ENCODE measurements at regions of chr20 and their contacts with region 1.

Region 1: DNA sequence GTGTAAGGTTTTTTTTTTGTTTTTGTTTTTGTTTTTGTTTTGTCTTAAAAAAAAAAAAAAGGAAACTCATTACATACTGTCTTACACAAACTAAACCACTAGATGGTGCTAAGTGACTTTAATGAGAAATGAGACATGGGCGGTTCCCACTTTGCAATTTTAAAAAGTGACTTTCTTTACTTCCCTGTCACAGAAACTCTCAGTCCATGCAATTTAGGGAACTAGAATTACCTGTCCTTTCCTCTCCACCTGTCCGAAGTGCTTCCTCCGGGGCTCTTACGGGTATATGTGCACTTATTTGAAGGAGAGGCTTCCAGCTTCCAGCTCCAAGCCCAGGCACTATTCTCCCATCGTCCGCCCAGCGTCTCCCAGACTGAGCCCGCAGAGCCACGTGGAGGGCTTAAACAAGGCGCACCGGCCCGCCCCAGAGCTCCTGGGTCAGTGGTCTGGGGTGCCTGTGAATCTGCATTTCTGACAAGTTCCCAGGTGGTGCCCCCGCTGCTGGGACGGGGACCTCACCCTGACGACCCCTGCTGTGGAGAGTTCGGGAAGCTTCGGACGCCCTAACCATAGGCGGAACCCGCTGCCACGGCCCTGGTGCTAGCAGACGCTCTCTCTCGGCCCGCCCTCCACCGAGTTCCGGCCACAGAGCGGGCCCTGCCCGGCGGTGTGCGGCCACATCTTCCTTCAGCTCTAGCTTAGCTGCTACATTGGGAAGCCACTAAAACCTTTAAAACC is 26.1 kb downstream of the BFSP1 start:
- DNase-seq: peak; percentile 67
- H3K4me3 Mint-ChIP-seq: peak overlapping the region; percentile 80
- H3K27ac Mint-ChIP-seq: peak overlapping the region; percentile 66
- H3K4me1 Mint-ChIP-seq: peaks cover 35% of the 10 kb centered on the region
- H3K27me3 Mint-ChIP-seq: no peaks in the 10 kb centered on the region

Region 2: DNA sequence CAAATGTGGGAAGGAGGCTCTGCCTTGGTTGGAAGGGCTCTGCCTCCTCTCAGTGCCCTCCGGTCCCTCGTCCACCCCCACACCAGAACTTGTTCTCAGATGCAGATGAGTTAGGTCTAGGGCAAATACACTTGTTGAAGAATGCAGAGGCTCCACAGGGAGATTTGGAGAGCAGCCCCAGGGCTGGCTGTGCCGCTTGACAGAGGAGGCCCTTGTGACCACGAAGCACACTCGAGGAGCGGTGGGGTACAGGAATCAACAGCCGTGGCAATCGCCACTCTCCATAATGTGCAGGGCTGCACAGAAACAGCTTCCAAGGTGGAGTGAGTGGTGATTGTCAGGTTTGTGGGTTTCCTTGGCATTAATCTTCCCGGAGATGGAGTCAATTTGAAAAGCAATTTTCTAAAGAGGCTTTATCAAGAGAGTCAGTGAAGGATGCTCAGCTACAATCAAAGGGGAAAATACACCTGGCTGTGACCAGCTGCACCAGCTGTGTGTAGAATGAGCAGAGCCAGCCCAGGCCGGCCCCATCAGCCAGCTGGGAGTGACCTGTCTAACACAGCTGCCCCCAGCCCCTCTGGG is 33.4 kb before region 1 on chr20:
- CTCF ChIA-PET with region 1: no interaction called
- POLR2A ChIA-PET with region 1: no interaction called
- intact Hi-C with region 1: no loop called
- DNase-seq: no peak
- H3K4me3 Mint-ChIP-seq: no peak overlapping the region
- H3K27ac Mint-ChIP-seq: no peak overlapping the region
- H3K4me1 Mint-ChIP-seq: no peaks in the 10 kb centered on the region
- H3K27me3 Mint-ChIP-seq: peaks cover 1% of the 10 kb centered on the region

Region 3: DNA sequence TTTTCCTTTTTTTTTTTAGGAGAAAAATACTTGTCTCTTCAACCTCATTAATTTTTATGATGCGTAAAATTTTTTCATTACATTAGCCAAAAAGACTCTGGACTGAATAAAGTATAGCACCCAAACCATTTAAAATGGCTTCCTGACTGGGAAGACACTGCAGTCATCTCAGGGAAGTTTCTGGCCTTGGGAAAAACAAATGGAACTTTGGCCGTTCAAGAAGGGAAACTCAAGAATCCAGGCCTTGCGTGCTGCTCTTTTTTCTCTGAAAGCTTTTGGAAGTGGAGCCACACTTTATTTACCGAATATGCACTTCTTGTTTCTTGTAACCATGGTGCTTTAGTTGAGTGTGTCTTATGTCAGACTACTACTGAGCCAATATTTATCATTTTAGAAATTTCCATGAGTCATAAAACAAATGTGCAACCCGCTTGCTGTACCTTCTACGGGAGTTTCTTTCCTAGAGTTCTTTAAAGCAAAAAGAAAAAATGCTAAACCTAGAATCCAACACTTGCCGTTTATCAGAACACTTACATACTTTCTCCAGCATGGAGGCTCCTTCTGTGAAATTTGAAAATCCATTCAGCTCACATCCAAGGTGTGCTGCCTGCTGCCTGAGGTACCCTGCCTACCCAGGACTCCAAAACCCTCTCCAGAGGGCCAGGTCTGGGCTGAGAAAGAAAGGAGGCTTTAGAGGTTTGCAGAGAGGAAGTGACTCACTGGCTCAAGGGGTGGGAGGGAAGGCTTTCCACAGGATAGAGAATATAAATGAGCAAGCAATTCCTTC is 53.3 kb after region 1 on chr20:
- CTCF ChIA-PET with region 1: interaction called, 3 read pairs
- POLR2A ChIA-PET with region 1: no interaction called
- intact Hi-C with region 1: loop called (anchors 2 kb)
- DNase-seq: peak; percentile 59
- H3K4me3 Mint-ChIP-seq: peak overlapping the region; percentile 14
- H3K27ac Mint-ChIP-seq: peak overlapping the region; percentile 87
- H3K4me1 Mint-ChIP-seq: peaks cover 38% of the 10 kb centered on the region
- H3K27me3 Mint-ChIP-seq: no peaks in the 10 kb centered on the region

Region 4: DNA sequence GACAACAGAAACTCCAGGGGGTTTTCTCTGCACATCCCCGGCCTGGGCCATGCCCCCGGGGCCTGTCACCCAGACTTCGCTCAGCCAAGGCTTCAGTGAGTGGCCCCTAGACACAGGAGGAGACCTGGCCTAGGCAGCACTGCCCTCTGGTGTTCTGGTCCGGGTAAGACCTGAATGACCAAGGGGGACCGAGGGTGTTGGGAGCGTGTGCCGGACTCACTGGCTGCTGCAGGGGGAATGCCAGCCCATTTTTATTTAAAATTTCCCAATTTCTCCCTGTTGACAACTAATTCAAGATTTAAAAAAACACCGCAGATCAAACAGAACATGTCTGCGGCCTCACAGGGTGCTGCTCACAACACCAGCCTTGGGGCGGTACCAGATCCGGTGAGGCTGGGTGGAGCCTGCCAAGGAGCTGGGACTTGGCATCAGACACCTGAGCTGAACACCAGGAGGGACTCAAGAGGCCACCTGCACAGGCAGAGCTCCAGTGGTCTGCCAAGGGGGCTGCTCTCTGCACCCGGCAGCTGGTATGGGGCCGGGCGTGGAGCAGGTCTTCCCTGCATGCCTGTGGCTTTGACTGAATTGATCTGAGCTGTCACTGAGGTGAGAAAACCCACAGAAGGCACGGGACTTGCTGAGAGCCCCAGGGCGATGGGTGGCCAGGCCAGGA is 112.6 kb after region 1 on chr20:
- CTCF ChIA-PET with region 1: interaction called, 27 read pairs
- POLR2A ChIA-PET with region 1: no interaction called
- intact Hi-C with region 1: loop called (anchors 1 kb)
- DNase-seq: peak; percentile 63
- H3K4me3 Mint-ChIP-seq: no peak overlapping the region
- H3K27ac Mint-ChIP-seq: no peak overlapping the region
- H3K4me1 Mint-ChIP-seq: peaks cover 3% of the 10 kb centered on the region
- H3K27me3 Mint-ChIP-seq: no peaks in the 10 kb centered on the region

Region 5: GRCh38 chr20:17898548-17898994 is 393.5 kb after region 1 on chr20:
- CTCF ChIA-PET with region 1: interaction called, 32 read pairs
- POLR2A ChIA-PET with region 1: interaction called, 4 read pairs
- intact Hi-C with region 1: loop called (anchors 1 kb)
- DNase-seq: peak; percentile 73
- H3K4me3 Mint-ChIP-seq: no peak overlapping the region
- H3K27ac Mint-ChIP-seq: no peak overlapping the region
- H3K4me1 Mint-ChIP-seq: peaks cover 16% of the 10 kb centered on the region
- H3K27me3 Mint-ChIP-seq: peaks cover 23% of the 10 kb centered on the region

Region 6: GRCh38 chr20:18137412-18138265 is 632.6 kb after region 1 on chr20 and contains the starts of genes KAT14 and PET117:
- CTCF ChIA-PET with region 1: interaction called, 3 read pairs
- POLR2A ChIA-PET with region 1: no interaction called
- intact Hi-C with region 1: loop called (anchors 2 kb)
- DNase-seq: peak; percentile 93
- H3K4me3 Mint-ChIP-seq: peak within 1 kb of the TSS; percentile 65
- H3K27ac Mint-ChIP-seq: peak within 1 kb of the TSS; percentile 76
- H3K4me1 Mint-ChIP-seq: peaks cover 29% of the 10 kb centered on the region
- H3K27me3 Mint-ChIP-seq: no peaks in the 10 kb centered on the region
- total RNA-seq, gene KAT14: 14.2 to 14.4 TPM
- total RNA-seq, gene PET117: 15.2 to 15.9 TPM

Measured in activated CD4-positive, alpha-beta memory T cell treated with anti-CD3 and anti-CD28 coated beads for 36 hours (primary cell).